ENCODE measurements at regions of chr12 and their contacts with region 1.

Region 1: GRCh38 chr12:57983146-57983857 is 41.9 kb downstream of the ATP23 start:
- DNase-seq: peak; percentile 12
- ATAC-seq: no peak
- H3K4me3 ChIP-seq: no peak overlapping the region
- H3K27ac ChIP-seq: no peak overlapping the region
- H3K4me1 ChIP-seq: no peaks in the 10 kb centered on the region
- H3K27me3 ChIP-seq: peaks cover 0 to 8% of the 10 kb centered on the region in 2 experiments; a peak in 1 of 5 replicates
- CTCF ChIP-seq: peak; percentile 64
- EP300 ChIP-seq: no peak
- POLR2A ChIP-seq: no peak
- RAD21 ChIP-seq: no peak

Region 2: DNA sequence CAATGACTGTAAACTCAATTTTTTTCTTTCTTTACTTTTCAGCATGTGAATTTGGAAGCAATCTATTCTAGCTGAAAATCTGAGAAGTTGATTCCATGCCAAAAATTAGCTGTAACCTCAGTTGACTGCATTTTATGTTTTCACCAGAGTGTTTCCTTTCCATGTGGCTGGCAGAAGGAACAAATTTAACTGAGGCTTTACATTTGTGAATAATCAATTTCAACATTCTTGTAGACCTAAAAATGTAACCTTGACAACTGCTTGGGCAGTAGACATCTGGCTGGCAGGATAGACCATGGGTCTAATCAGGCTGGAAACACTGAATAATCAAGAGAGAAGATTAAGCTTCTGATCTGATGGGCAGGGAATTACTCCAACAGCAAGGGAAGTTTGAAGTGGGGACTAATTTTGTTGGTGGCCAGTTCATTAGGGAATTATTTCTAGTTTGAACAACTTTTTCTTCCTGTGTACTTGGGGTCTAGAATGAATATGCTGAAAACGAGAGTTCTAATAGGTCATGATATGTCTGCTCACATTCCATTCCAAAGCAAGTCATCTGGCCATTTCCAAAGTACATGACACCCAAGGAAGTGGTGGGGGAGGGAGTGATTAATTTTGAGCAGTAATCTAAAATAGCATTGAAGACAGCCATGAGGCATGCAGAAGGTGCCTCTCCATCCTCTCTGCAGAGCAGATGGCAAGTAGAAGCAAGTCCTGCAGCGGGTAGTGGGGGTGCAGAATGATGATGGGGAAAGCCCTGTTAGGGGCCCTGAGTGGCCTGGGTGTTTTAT is 26.3 kb after region 1 on chr12:
- CTCF ChIA-PET with region 1: no interaction called
- POLR2A ChIA-PET with region 1: no interaction called
- in situ Hi-C with region 1: no loop called
- intact Hi-C with region 1: no loop called
- DNase-seq: no peak
- ATAC-seq: no peak
- H3K4me3 ChIP-seq: no peak overlapping the region
- H3K27ac ChIP-seq: no peak overlapping the region
- H3K4me1 ChIP-seq: no peaks in the 10 kb centered on the region
- H3K27me3 ChIP-seq: no peaks in the 10 kb centered on the region
- CTCF ChIP-seq: no peak
- EP300 ChIP-seq: no peak
- POLR2A ChIP-seq: no peak
- RAD21 ChIP-seq: no peak

Region 3: DNA sequence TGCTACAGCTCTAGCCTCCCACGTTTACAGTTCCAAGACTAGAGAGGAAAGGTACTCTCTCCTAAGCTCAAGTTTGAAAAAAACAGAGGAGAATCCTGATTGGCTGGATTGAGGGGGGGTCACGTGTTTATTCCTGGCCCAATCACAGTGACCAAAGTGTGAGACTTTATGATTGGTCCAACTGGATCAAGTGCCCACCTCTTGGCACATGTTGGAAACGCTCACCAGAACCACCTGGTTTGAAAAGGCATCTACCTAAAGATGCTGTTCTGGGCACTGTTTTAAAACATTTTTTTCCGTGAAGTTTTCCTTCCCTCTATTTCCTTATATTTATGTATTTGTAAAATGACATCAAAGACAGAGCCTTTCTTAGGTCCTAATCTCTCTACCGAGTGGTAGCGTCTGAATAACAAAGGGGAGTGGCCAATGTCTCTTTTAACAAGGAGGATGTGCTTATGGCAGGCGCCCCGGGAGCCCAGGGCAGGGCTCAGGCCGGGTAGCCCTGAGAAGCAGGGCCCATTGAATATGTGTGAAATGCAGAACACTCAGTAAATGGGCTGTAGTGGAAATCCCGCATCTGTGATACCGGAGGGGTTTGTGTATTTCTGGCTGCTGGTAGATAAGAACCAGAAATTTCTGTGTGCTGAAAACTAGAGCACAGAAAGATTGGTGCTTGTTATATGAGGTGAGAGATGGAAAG is 104.3 kb after region 1 on chr12:
- CTCF ChIA-PET with region 1: no interaction called
- POLR2A ChIA-PET with region 1: no interaction called
- in situ Hi-C with region 1: no loop called
- intact Hi-C with region 1: no loop called
- DNase-seq: no peak
- ATAC-seq: no peak
- H3K4me3 ChIP-seq: no peak overlapping the region
- H3K27ac ChIP-seq: no peak overlapping the region
- H3K4me1 ChIP-seq: no peaks in the 10 kb centered on the region
- H3K27me3 ChIP-seq: peaks cover 0 to 7% of the 10 kb centered on the region in 2 experiments; a peak in 1 of 5 replicates
- CTCF ChIP-seq: no peak
- EP300 ChIP-seq: no peak
- POLR2A ChIP-seq: no peak
- RAD21 ChIP-seq: no peak

Region 4: GRCh38 chr12:58310828-58311622 is 327.7 kb after region 1 on chr12:
- CTCF ChIA-PET with region 1: no interaction called
- POLR2A ChIA-PET with region 1: no interaction called
- in situ Hi-C with region 1: no loop called
- intact Hi-C with region 1: no loop called
- DNase-seq: peak; percentile 28
- ATAC-seq: no peak
- H3K4me3 ChIP-seq: no peak overlapping the region
- H3K27ac ChIP-seq: no peak overlapping the region
- H3K4me1 ChIP-seq: no peaks in the 10 kb centered on the region
- H3K27me3 ChIP-seq: no peaks in the 10 kb centered on the region
- CTCF ChIP-seq: no peak
- EP300 ChIP-seq: no peak
- POLR2A ChIP-seq: no peak
- RAD21 ChIP-seq: no peak

Region 5: DNA sequence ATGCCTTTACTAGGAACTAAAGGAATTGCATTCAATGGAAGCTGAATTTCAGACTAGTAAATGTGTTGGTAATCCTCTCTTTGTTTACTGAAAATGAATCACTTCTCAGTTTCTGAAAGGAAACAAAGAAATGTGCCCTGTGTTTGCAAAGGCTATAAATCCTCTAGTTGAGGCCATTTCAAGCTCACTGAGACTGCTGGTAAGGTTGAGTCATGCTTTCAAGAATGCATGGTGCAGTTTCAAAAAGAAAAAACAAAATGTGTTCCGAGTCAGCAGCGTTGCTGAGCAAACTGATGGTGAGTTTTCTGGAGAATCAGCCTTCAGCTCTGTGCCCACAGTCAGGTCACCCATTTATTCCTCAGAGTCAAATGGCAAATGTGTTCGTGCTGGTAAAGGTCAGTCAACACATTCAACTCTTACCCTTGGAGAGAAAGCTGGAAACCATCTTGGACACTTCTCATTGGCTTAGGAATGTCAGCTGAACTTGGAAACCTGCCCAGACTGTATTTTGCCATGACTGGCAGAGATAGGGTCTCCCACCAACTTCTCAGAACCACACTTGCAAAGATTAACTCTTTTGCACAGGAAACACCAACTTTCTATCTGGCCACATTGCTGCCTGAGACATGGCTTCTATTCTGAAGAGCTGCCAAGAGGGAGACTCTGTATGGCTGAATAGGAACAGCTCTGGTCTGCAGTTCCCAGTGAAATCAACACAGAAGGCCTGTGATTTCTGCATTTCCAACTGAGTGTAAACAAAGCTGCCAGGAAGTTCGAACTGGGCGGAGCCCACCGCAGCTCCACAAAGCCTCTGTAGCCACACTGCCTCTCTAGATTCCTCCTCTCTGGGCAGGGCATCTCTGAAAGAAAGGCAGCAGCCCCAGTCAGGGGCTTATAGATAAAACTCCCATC is 442.4 kb after region 1 on chr12:
- CTCF ChIA-PET with region 1: no interaction called
- POLR2A ChIA-PET with region 1: no interaction called
- in situ Hi-C with region 1: loop called (anchors 25 kb)
- intact Hi-C with region 1: no loop called
- DNase-seq: peak; percentile 37
- ATAC-seq: peak; percentile 75
- H3K4me3 ChIP-seq: peak overlapping the region in 1 of 3 experiments; percentile 26; a peak in 2 of 6 replicates
- H3K27ac ChIP-seq: no peak overlapping the region
- H3K4me1 ChIP-seq: peaks cover 8% of the 10 kb centered on the region; the same call in 1 of the 2 replicates
- H3K27me3 ChIP-seq: no peaks in the 10 kb centered on the region
- CTCF ChIP-seq: no peak
- EP300 ChIP-seq: no peak
- POLR2A ChIP-seq: no peak
- RAD21 ChIP-seq: no peak

Region 6: DNA sequence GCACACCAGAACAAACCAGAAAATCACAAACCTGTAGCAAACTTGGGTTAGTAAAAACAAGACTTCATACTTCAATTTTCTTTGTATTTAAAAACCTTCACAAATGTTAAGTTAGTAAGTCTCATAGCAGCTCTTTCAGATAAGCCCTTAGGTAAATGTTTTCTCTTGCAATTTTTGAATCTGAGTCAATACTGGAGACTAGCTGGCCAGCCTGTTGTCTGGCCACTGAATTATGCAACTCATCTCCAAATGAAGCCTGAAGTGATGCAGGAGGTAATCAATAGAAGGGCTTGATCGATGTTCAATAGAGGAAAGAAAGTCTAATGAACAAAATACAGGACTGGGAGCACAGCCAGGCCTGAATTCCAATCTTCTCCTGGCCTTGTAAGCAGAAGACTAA is 471.8 kb after region 1 on chr12:
- CTCF ChIA-PET with region 1: no interaction called
- POLR2A ChIA-PET with region 1: no interaction called
- in situ Hi-C with region 1: no loop called
- intact Hi-C with region 1: loop called (anchors 5 kb)
- DNase-seq: no peak
- ATAC-seq: no peak
- H3K4me3 ChIP-seq: no peak overlapping the region
- H3K27ac ChIP-seq: no peak overlapping the region
- H3K4me1 ChIP-seq: no peaks in the 10 kb centered on the region
- H3K27me3 ChIP-seq: no peaks in the 10 kb centered on the region
- CTCF ChIP-seq: no peak
- EP300 ChIP-seq: no peak
- POLR2A ChIP-seq: no peak
- RAD21 ChIP-seq: no peak